CD8-positive, alpha-beta T cell (primary cell): ENCODE measurements at regions of chr12 and their contacts with region 1.

Region 1: DNA sequence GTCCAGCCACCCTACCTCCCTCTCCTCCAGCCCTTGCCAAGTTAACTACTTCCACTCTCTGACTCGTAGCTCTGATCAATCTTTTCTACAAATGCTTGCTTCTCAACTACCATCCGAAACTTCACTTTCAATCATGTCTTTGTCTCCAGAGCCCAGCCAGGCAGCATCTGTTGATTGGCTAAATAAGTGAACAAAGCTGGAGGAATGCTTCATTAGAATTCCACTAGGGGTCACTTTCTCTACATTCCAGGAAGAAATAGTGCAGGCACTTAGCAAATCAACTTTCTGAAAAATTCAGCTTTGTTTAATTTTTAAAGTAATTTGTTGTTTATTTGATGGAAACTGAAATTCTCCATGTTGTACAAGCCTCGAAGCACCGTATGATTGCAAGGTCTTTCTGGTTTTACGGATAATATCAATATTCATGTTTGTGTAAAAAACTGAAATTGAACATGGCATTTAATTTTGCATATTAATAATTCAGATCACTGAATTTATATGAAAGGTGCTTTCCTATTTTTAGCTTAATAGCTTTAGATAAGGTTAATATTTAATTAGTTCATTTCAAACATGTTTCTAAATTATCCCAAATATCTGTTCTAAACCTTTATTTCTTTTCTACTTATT is 32.4 kb upstream of the HELB start:
- DNase-seq: peak in 3 of 9 experiments; percentile 13 to 65 (median 56)
- ATAC-seq: peak; percentile 62
- H3K4me3 ChIP-seq: no peak overlapping the region
- H3K4me3 Mint-ChIP-seq: no peak overlapping the region
- H3K27ac ChIP-seq: no peak overlapping the region
- H3K27ac Mint-ChIP-seq: no peak overlapping the region
- H3K4me1 ChIP-seq: no peaks in the 10 kb centered on the region
- H3K4me1 Mint-ChIP-seq: peaks cover 7% of the 10 kb centered on the region
- H3K27me3 ChIP-seq: no peaks in the 10 kb centered on the region
- H3K27me3 Mint-ChIP-seq: peaks cover 2% of the 10 kb centered on the region
- CTCF ChIP-seq: peak; percentile 72

Region 2: DNA sequence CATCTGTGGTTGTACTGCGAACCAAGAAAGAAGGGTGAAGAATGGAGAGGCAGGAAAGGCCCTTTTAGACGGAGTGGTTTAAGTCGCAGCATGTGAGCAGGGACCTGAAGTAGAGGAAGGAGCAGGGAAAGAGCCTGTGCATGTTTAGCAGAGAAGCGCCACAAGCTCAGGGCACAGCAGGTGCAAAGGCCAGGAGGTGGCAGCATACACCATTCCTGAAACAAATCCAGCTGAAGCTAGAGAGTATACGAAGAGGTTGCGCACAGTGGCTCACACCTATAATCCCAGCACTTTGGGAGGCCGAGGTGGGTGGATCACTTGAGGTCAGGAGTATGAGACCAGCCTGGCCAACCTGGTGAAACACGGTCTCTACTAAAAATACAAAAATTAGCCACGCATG is 82.3 kb after region 1 on chr12:
- CTCF ChIA-PET with region 1: interaction called, 11 read pairs
- POLR2A ChIA-PET with region 1: no interaction called
- intact Hi-C with region 1: no loop called
- DNase-seq: peak in 3 of 9 experiments; percentile 6 to 30 (median 14)
- ATAC-seq: no peak
- H3K4me3 ChIP-seq: no peak overlapping the region
- H3K4me3 Mint-ChIP-seq: no peak overlapping the region
- H3K27ac ChIP-seq: no peak overlapping the region
- H3K27ac Mint-ChIP-seq: no peak overlapping the region
- H3K4me1 ChIP-seq: no peaks in the 10 kb centered on the region
- H3K4me1 Mint-ChIP-seq: no peaks in the 10 kb centered on the region
- H3K27me3 ChIP-seq: no peaks in the 10 kb centered on the region
- H3K27me3 Mint-ChIP-seq: no peaks in the 10 kb centered on the region
- CTCF ChIP-seq: no peak

Region 3: DNA sequence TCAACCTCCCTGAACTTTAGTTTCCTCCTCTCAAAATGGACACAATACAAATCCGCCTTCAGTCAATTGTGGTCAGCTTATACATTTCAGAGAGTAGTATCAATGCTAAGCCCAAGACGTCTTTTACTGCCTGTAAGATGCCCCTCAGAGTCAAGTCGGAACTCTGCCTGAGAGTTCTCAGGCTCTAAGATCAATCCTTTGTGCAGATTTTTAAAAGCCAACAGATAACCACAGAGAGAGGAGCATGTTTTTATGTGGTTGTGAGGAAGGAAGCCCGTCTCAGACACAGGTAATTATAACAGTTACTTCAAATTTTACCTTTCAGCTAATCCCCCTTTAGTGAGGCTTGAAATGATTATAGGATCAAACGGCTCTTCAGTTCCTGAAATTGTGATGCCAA is 124.0 kb after region 1 on chr12:
- CTCF ChIA-PET with region 1: interaction called, 16 read pairs
- POLR2A ChIA-PET with region 1: interaction called, 3 read pairs
- intact Hi-C with region 1: no loop called
- DNase-seq: peak in 3 of 9 experiments; percentile 5 to 57 (median 28)
- ATAC-seq: peak; percentile 66
- H3K4me3 ChIP-seq: no peak overlapping the region
- H3K4me3 Mint-ChIP-seq: peak overlapping the region; percentile 42
- H3K27ac ChIP-seq: no peak overlapping the region
- H3K27ac Mint-ChIP-seq: no peak overlapping the region
- H3K4me1 ChIP-seq: peaks cover 16% of the 10 kb centered on the region
- H3K4me1 Mint-ChIP-seq: peaks cover 22% of the 10 kb centered on the region
- H3K27me3 ChIP-seq: peaks cover 0 to 3% of the 10 kb centered on the region in 2 experiments
- H3K27me3 Mint-ChIP-seq: peaks cover 49% of the 10 kb centered on the region
- CTCF ChIP-seq: no peak

Region 4: DNA sequence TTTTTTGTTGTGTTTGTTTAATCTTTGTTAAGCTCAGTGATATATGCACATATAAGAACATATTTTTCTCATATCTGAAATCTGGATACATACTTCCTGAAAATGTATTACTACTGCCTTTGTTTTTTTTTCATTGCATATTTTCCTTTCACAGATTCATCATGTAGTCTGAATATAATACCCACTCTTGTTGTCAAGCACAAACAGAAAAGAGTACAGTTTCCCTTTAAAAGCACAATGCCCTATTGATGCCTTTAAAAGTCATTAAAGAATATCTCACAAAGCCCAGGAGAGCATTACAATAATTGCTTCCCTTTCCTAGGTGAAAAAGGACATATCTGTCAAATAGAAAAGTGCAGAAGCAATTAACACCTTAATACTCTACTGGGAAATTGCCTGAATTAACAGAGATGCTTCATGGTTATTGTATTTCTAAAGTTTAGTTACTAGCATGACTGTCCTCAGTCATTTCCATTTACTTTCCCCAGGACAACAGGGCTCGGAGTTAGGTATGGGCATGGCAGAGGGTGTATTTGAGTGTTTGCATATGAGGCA is 301.6 kb after region 1 on chr12:
- CTCF ChIA-PET with region 1: no interaction called
- POLR2A ChIA-PET with region 1: no interaction called
- intact Hi-C with region 1: no loop called
- DNase-seq: no peak
- ATAC-seq: no peak
- H3K4me3 ChIP-seq: no peak overlapping the region
- H3K4me3 Mint-ChIP-seq: no peak overlapping the region
- H3K27ac ChIP-seq: no peak overlapping the region
- H3K27ac Mint-ChIP-seq: no peak overlapping the region
- H3K4me1 ChIP-seq: no peaks in the 10 kb centered on the region
- H3K4me1 Mint-ChIP-seq: no peaks in the 10 kb centered on the region
- H3K27me3 ChIP-seq: no peaks in the 10 kb centered on the region
- H3K27me3 Mint-ChIP-seq: peaks cover 5% of the 10 kb centered on the region
- CTCF ChIP-seq: no peak

Region 5: GRCh38 chr12:66688846-66689439 is 419.1 kb after region 1 on chr12:
- CTCF ChIA-PET with region 1: interaction called, 23 read pairs
- POLR2A ChIA-PET with region 1: no interaction called
- intact Hi-C with region 1: loop called (anchors 1 kb)
- DNase-seq: peak; percentile 6 to 69 (median 33)
- ATAC-seq: peak; percentile 56
- H3K4me3 ChIP-seq: no peak overlapping the region
- H3K4me3 Mint-ChIP-seq: no peak overlapping the region
- H3K27ac ChIP-seq: no peak overlapping the region
- H3K27ac Mint-ChIP-seq: no peak overlapping the region
- H3K4me1 ChIP-seq: no peaks in the 10 kb centered on the region
- H3K4me1 Mint-ChIP-seq: peaks cover 2% of the 10 kb centered on the region
- H3K27me3 ChIP-seq: peaks cover 0 to 5% of the 10 kb centered on the region in 2 experiments
- H3K27me3 Mint-ChIP-seq: peaks cover 7% of the 10 kb centered on the region
- CTCF ChIP-seq: peak; percentile 47